ENCODE measurements at regions of chr10 and their contacts with region 1.

Region 1: DNA sequence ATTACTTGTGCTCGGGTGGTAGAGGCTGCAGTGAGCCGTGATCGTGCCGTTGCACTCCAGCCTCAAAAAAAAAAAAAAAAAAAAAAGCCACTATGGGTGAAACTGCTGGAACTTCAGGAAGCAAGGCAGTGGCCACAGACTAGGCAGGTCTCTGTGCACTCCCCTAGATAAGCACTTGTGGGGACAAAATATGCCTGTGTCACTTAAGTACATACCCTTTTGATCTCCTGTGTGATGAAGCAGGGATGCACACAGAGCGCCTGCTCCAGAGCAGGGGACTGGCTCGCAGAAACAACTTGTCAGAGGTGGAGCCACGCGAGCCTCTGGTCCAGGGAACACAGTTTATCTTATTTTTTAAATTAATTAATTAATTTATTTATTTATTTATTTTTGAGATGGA is 42.9 kb upstream of the PSAP start:
- DNase-seq: no peak
- H3K4me3 ChIP-seq: no peak overlapping the region
- H3K27ac ChIP-seq: no peak overlapping the region
- H3K27me3 ChIP-seq: peaks cover 5% of the 10 kb centered on the region
- CTCF ChIP-seq: no peak

Region 2: DNA sequence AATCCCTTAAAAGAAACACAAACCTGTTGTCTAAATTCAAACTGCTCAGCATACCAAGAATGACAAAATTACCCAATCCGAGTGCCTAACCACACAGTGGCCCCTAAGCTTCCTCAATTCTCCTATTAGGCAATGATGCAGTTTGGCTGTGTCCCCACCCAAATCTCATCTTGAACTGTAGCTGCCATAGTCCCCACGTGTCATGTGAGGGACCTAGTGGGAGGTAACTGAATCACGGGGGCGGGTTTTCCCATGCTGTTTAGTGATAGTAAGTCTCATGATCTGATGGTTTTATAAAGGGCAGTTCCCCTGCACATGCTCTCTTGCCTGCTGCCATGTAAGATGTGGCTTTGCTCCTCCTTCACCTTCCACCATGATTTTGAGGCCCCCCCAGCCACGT is 64.7 kb before region 1 on chr10:
- CTCF ChIA-PET with region 1: interaction called, 13 read pairs
- POLR2A ChIA-PET with region 1: no interaction called
- DNase-seq: no peak
- H3K4me3 ChIP-seq: no peak overlapping the region
- H3K27ac ChIP-seq: no peak overlapping the region
- H3K27me3 ChIP-seq: no peaks in the 10 kb centered on the region
- CTCF ChIP-seq: no peak

Region 3: GRCh38 chr10:71882813-71883659 is 10.9 kb before region 1 on chr10:
- CTCF ChIA-PET with region 1: interaction called, 10 read pairs
- POLR2A ChIA-PET with region 1: no interaction called
- DNase-seq: no peak
- H3K4me3 ChIP-seq: no peak overlapping the region
- H3K27ac ChIP-seq: no peak overlapping the region
- H3K27me3 ChIP-seq: peaks cover 23% of the 10 kb centered on the region
- CTCF ChIP-seq: no peak

Region 4: DNA sequence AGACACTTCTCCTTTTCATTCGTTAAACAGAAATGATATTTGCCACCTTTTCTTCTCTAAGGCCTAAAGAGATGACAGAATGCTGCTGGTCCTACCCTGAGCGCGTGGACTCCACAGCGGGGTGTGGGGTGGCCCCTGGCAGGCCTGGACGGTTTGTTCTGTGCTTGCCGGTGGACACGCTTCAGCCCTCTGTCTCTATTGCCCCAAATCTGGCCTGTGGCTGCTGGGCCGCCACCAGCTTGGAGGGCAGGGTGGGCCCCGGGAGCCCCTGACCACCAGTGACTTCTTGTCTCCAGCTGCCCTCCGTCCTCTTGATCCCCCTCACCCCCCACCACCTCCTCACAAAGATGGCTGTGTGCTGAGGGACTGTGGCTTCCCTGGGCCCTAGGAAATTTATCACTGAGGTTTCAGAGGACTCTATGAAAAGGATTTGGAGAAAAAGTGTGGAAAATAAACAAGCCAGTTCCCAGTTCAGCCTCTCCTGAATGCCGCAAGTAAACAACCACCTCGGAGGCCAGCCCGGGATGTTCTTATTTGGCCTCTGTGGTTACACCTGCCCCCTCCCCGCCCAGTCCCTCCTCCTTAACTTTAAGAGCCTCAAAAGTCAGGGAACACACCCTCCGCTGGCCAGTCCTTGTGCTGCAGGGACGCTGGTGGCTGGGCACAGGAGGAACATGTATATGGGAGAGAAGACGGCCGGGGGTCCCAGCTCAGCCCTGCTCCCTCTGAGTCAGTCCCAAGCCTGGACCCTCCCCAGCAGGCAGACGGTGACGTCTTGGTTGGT is 76.2 kb after region 1 on chr10:
- CTCF ChIA-PET with region 1: interaction called, 10 read pairs
- POLR2A ChIA-PET with region 1: interaction called, 3 read pairs
- DNase-seq: no peak
- H3K4me3 ChIP-seq: no peak overlapping the region
- H3K27ac ChIP-seq: no peak overlapping the region
- H3K27me3 ChIP-seq: no peaks in the 10 kb centered on the region
- CTCF ChIP-seq: peak; percentile 25; the same call in 1 of the 2 replicates

Region 5: DNA sequence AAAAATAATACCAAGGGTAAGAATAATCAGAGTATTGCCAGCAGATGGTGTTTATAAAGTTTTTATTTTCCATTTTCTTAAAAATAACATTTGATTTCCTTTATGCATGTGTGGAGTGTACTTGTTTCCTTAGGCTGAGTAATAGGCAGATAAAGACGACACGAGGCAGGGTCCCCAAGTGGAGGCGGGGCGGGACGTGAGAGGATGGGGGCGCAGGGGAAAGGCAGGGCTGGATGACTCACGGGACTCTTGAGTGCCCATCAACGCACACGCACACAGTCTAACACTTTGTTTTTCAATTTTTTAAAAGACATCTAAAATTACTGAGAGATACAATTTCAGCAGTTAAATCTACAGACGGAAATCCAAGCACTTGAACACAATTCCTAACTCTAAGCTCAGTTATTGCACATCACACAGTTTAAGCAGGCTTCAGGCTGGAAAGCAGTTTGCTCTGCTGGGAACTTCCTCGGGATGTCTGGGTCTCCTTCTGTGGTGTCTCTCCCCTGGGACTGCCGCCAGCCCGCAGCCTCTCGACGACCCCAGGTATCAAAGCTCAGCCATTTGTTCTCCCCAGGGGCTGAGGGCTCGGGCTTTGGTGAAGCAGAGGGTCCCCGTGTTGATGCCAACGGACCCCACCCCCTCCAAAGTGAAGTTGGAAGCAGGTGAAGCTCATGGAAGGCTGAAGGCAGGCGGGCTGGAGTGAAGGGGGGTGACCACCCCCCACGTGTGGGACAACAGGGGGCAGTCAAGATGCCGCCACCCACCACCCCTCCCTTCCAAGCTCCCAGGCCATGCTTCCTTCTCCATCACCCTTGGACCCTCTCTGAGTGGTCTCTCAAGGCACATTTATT is 165.3 kb after region 1 on chr10:
- CTCF ChIA-PET with region 1: interaction called, 10 read pairs
- POLR2A ChIA-PET with region 1: no interaction called
- DNase-seq: no peak
- H3K4me3 ChIP-seq: no peak overlapping the region
- H3K27ac ChIP-seq: no peak overlapping the region
- H3K27me3 ChIP-seq: peaks cover 28% of the 10 kb centered on the region
- CTCF ChIP-seq: no peak

Region 6: DNA sequence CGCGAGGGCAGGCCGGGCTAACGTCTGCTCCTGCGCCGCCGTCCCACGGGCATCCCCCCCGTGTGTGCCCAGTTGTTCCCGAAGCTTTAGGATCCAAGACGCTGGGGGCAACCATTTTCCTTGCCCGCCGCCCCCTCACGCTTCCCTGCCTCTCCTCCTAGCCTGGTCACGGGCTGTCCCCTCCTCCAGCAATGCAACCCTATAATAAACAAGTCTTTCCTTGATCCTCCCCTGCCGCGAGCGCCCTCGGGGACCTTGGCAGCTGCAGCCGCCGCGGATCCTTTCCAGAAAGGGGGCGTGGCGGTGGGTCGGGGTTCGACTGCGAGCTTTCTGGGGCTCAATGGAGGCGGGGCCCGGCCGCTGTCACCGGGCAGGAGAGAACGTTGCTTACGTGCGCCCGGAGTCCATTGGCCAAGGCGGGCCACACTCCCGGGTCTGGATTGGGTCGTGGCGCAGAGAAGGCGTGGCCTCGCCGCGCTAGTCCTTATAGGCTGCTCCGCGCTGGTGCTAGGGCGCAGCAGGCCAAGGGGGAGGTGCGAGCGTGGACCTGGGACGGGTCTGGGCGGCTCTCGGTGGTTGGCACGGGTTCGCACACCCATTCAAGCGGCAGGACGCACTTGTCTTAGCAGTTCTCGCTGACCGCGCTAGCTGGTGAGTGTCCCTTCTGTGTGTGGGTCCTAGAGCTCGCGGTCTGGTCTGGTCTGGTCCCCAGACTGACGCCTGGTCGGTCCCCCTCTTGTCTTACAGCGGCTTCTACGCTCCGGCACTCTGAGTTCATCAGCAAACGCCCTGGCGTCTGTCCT is 379.7 kb after region 1 on chr10 and contains the start of gene DDIT4:
- CTCF ChIA-PET with region 1: no interaction called
- POLR2A ChIA-PET with region 1: interaction called, 11 read pairs
- DNase-seq: peak; percentile 99
- H3K4me3 ChIP-seq: peak within 1 kb of the TSS; percentile 98
- H3K27ac ChIP-seq: peak within 1 kb of the TSS; percentile 99
- H3K27me3 ChIP-seq: no peaks in the 10 kb centered on the region
- CTCF ChIP-seq: no peak
- polyA plus RNA-seq, gene DDIT4: 103 and 120 TPM in 2 replicates